Kidney (tissue), 22 donors: ENCODE measurements at regions of chr15 and their contacts with region 1.

Region 1: DNA sequence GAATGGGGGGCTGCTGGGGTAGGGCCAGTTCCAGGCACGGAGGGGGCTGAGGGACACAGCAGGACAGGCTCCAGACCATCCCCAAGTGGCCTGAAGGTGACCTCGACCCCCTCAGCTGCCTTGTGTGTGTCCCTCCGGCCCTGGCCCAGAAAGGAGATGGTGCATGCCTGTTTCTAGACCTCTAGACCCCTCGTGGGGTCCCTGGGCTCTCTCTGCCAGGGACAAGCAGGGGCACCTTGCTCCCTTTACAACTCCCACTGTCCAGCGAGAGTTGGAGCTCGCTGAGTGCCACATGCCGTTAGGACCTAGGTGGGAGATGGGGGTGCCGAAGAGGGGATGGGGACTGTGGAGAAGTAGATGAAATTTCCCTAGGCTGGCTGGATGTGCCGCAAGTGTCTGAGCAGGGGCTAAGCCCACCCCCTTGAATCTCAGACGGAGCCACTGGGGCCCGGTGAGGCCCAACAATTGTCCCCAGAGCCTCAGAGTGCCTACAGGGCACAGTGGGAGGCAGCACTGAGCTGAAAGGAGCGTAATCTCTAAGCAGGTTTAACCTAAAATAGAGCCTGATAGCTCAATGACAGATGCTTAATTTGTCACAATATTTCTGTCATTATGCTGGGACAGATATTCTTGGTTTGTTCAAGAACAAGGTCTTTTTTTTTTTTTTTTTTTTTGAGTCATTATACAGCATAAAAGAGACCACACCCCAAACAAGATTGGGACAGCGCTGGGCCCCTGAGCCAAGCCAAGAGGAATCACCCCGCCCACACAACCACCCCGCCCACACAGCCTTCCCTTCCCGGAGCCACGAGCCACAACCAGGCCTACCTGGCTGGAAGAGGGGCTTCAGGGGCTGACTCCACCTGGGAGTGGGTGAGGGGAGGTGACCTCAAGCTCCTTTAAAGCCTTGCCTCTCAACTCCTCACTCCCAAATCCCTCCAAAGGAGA is 23.6 kb upstream of the KLF13 start:
- DNase-seq: peak in 2 of 5 donors; percentile 7 to 75
- H3K4me3 ChIP-seq: no peak overlapping the region
- H3K27ac ChIP-seq: no peak overlapping the region
- H3K4me1 ChIP-seq: peaks cover 0 to 5% (median 0%) of the 10 kb centered on the region in 3 donors
- H3K27me3 ChIP-seq: no peaks in the 10 kb centered on the region
- CTCF ChIP-seq: no peak

Region 2: GRCh38 chr15:31163746-31164563 is 139.1 kb before region 1 on chr15:
- intact Hi-C with region 1: no loop called
- DNase-seq: no peak
- H3K4me3 ChIP-seq: no peak overlapping the region
- H3K27ac ChIP-seq: no peak overlapping the region
- H3K4me1 ChIP-seq: no peaks in the 10 kb centered on the region
- H3K27me3 ChIP-seq: no peaks in the 10 kb centered on the region
- CTCF ChIP-seq: no peak

Region 3: GRCh38 chr15:31228985-31229826 is 73.8 kb before region 1 on chr15:
- intact Hi-C with region 1: loop called (anchors 10 kb)
- DNase-seq: peak in 2 of 5 donors; percentile 18 to 21
- H3K4me3 ChIP-seq: no peak overlapping the region
- H3K27ac ChIP-seq: no peak overlapping the region
- H3K4me1 ChIP-seq: peaks cover 0 to under 1% (median 0%) of the 10 kb centered on the region in 3 donors
- H3K27me3 ChIP-seq: peaks cover 2% of the 10 kb centered on the region
- CTCF ChIP-seq: no peak